HEK293T (cell line): ENCODE measurements at regions of chr10 and their contacts with region 1.

Region 1: DNA sequence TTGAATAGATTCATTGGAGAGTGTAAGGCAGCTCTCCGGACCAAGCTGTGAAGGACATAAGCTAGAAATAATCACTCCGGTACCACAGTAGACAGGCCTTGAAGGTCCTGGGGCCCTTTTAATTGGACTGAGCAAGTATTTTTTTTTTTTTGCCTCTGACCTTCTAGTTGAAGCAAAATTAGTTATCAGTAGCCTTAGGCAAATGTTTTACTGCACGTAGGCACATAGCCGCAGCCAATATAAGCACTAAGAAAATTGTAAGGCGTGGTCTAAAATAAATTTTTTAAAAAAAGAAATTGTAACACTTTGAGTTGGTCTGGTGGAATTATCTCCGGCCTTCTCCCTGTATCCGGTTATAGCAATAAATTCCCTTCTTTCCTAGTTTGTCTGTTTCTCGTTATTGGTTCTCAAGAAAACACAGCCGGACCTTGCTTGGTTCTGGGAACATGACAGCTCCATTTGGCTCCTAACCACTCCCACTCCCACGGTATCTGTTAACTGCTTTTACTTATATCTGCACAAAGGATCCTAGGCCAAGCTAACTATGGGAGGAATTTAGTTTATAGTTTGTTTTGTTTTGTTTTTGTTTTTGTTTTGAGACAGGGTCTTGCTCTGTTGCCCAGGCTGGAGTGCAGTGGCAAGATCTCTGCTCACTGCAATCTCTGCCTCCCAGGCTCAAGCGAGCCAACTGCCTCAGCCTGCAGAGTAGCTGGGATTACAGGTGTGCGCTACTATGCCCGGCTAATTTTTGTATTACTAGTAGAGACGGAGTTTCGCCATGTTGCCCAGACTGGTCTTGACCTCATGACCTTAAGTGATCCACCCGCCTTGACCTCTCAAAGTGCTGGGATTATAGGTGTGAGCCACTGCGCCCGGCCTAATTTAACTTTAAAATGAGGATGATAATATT is 124.4 kb upstream of the KIF5B start:
- DNase-seq: no peak

Region 2: DNA sequence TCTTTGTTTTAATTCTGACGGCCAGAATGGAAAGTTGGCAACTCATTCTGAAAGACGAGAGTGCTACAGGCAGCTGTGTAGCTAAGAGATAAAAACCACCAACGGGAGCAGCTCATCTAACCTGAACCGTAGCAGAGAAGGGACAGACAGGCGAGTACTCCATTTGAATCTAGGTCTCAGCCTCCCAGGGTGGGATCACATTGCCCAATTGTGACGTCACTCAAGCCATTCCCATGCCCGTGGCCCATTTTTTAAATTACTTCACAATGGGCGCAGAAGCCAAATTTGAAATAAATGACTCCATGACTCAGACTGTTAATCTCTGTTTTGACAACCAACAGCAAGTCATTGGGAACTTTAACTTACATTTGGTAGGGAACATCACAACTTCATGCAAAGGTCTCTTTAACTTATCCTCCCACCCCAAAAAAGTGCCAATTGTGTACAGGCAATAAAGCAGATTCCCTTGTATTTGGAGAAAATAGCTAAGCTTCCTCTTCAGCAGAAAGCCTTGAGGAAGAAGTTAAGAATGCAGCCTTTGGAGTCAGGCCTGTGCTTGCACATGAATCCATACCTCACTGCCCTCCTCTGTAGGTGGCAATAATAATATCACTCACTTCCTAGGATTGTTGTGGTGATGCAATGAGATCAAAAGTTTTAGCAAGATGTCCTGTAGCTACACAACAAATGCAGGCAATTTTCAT is 31.2 kb before region 1 on chr10:
- CTCF ChIA-PET with region 1: interaction called, 11 read pairs
- POLR2A ChIA-PET with region 1: no interaction called
- DNase-seq: peak; percentile 15

Region 3: DNA sequence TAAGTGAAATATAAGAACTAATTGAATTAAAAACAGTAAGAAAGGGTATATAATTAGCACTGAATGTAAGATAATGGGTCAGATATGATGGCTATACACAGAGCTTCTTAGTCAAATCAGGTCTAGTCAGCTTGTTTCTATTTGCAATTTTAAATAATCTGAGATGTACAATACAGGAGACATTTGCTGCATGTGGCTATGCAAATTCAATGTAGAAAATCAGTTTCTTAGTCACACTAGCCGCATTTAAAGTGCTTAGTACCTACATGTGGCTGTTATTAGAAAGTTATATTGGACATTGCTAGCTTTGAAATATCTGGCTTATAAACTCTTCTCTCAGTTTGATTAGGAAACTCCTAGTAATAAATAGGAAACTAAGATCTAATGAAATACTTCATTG is 290.6 kb after region 1 on chr10:
- CTCF ChIA-PET with region 1: no interaction called
- POLR2A ChIA-PET with region 1: no interaction called
- DNase-seq: no peak